HepG2 (cell line): ENCODE measurements at regions of chr4 and their contacts with region 1.

Region 1: GRCh38 chr4:74623041-74623440 is 171.3 kb downstream of the BTC start:
- DNase-seq: peak; percentile 66
- ATAC-seq: peak; percentile 84
- H3K4me3 ChIP-seq: no peak overlapping the region
- H3K27ac ChIP-seq: peak overlapping the region; percentile 73
- H3K4me1 ChIP-seq: peaks cover 56% of the 10 kb centered on the region
- H3K27me3 ChIP-seq: no peaks in the 10 kb centered on the region
- CTCF ChIP-seq: peak; percentile 71
- EP300 ChIP-seq: no peak
- POLR2A ChIP-seq: no peak
- RAD21 ChIP-seq: peak; percentile 63; the same call in 1 of the 2 replicates

Region 2: DNA sequence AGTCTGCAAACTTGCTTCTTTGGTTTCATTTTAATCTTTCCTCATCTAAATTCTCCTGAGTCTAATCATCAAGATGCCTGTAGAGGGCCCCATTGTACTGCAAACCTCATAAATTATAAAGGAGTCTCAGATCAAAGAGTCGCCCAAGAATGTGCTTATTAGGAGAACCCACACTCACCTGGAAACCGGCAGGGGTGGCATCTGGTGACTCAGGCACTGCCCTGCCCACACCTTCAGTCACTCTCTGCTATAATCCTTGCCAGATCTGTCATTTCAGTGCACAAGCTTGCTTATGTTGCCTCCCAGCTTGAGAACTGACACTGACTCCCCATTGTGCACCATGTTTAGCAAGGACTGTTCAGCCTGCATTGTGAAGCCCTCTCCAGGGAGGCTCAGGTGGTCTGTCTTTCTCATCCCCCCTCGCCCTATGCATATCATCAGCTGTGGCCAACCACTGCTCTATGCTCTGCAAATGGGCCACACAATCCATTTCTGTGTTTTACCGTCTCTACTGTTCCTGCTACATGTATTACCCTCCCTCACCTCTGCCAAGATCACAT is 302.4 kb before region 1 on chr4:
- CTCF ChIA-PET with region 1: no interaction called
- POLR2A ChIA-PET with region 1: no interaction called
- in situ Hi-C with region 1: no loop called
- intact Hi-C with region 1: loop called (anchors 2 kb)
- DNase-seq: peak; percentile 58
- ATAC-seq: peak; percentile 81
- H3K4me3 ChIP-seq: no peak overlapping the region
- H3K27ac ChIP-seq: no peak overlapping the region
- H3K4me1 ChIP-seq: no peaks in the 10 kb centered on the region
- H3K27me3 ChIP-seq: no peaks in the 10 kb centered on the region
- CTCF ChIP-seq: peak; percentile 42
- EP300 ChIP-seq: no peak
- POLR2A ChIP-seq: no peak
- RAD21 ChIP-seq: peak; percentile 33; the same call in 1 of the 2 replicates

Region 3: GRCh38 chr4:74376888-74377483 is 246.1 kb before region 1 on chr4:
- CTCF ChIA-PET with region 1: interaction called, 10 read pairs
- POLR2A ChIA-PET with region 1: no interaction called
- in situ Hi-C with region 1: no loop called
- intact Hi-C with region 1: loop called (anchors 1 kb)
- DNase-seq: peak; percentile 45
- ATAC-seq: peak; percentile 60; the same call in 2 of the 3 replicates
- H3K4me3 ChIP-seq: no peak overlapping the region
- H3K27ac ChIP-seq: no peak overlapping the region
- H3K4me1 ChIP-seq: no peaks in the 10 kb centered on the region
- H3K27me3 ChIP-seq: no peaks in the 10 kb centered on the region
- CTCF ChIP-seq: peak; percentile 52
- EP300 ChIP-seq: no peak
- POLR2A ChIP-seq: no peak
- RAD21 ChIP-seq: no peak

Region 4: GRCh38 chr4:74531963-74532794 is 90.9 kb before region 1 on chr4:
- CTCF ChIA-PET with region 1: interaction called, 4 read pairs
- POLR2A ChIA-PET with region 1: interaction called, 3 read pairs
- in situ Hi-C with region 1: no loop called
- intact Hi-C with region 1: loop called (anchors 2 kb)
- DNase-seq: peak; percentile 75
- ATAC-seq: peak; percentile 93
- H3K4me3 ChIP-seq: no peak overlapping the region
- H3K27ac ChIP-seq: no peak overlapping the region
- H3K4me1 ChIP-seq: peaks cover 6% of the 10 kb centered on the region; the same call in 1 of the 2 replicates
- H3K27me3 ChIP-seq: no peaks in the 10 kb centered on the region
- CTCF ChIP-seq: peak; percentile 75
- EP300 ChIP-seq: no peak
- POLR2A ChIP-seq: no peak
- RAD21 ChIP-seq: no peak

Region 5: DNA sequence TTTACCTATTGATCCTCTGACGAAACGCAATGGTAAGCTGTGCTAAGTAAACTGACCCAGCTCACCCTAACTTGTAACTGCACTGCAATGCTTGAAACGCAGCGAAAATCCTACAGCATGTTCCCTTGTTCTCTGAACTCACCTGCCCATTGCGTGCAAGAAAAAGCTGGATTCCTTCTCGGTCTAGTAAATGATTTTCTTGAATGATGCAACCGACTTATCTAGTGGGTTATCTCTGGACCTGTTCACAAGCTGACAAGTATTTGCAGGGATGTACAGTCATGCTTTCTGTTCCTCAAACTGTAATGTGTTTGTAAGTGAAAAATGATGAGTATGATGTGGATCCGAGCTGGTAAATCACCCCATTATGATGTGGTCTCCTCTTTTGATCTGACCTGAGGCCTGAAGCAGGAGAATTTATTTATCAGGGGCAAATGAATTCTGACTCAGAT is 31.2 kb after region 1 on chr4:
- CTCF ChIA-PET with region 1: no interaction called
- POLR2A ChIA-PET with region 1: interaction called, 38 read pairs
- in situ Hi-C with region 1: no loop called
- intact Hi-C with region 1: loop called (anchors 1 kb)
- DNase-seq: peak; percentile 97
- ATAC-seq: peak; percentile 97
- H3K4me3 ChIP-seq: peak overlapping the region in 1 of 3 experiments; percentile 38; a peak in 2 of 6 replicates
- H3K27ac ChIP-seq: peak overlapping the region; percentile 87
- H3K4me1 ChIP-seq: peaks cover 71% of the 10 kb centered on the region
- H3K27me3 ChIP-seq: no peaks in the 10 kb centered on the region
- CTCF ChIP-seq: 0 out of 2 replicates have a peak, but pooled peaks have one; percentile 4
- EP300 ChIP-seq: peak; percentile 98
- POLR2A ChIP-seq: peak; percentile 42 to 75; a peak in 3 of 4 replicates
- RAD21 ChIP-seq: 0 out of 2 replicates have a peak, but pooled peaks have one; percentile 11

Region 6: GRCh38 chr4:74659576-74660411 is 36.8 kb after region 1 on chr4:
- CTCF ChIA-PET with region 1: no interaction called
- POLR2A ChIA-PET with region 1: interaction called, 38 read pairs
- in situ Hi-C with region 1: no loop called
- intact Hi-C with region 1: loop called (anchors 1 kb)
- DNase-seq: peak; percentile 92
- ATAC-seq: peak; percentile 71
- H3K4me3 ChIP-seq: no peak overlapping the region
- H3K27ac ChIP-seq: peak overlapping the region; percentile 69
- H3K4me1 ChIP-seq: peaks cover 77% of the 10 kb centered on the region
- H3K27me3 ChIP-seq: no peaks in the 10 kb centered on the region
- CTCF ChIP-seq: no peak
- EP300 ChIP-seq: peak in 1 of 2 experiments; percentile 97; a peak in 2 of 4 replicates
- POLR2A ChIP-seq: no peak
- RAD21 ChIP-seq: no peak

Region 7: GRCh38 chr4:75169427-75169826 is 546.4 kb after region 1 on chr4:
- CTCF ChIA-PET with region 1: no interaction called
- POLR2A ChIA-PET with region 1: no interaction called
- in situ Hi-C with region 1: no loop called
- intact Hi-C with region 1: no loop called
- DNase-seq: no peak
- ATAC-seq: no peak
- H3K4me3 ChIP-seq: no peak overlapping the region
- H3K27ac ChIP-seq: no peak overlapping the region
- H3K4me1 ChIP-seq: no peaks in the 10 kb centered on the region
- H3K27me3 ChIP-seq: no peaks in the 10 kb centered on the region
- CTCF ChIP-seq: no peak
- EP300 ChIP-seq: no peak
- POLR2A ChIP-seq: no peak
- RAD21 ChIP-seq: no peak